Calu3 (cell line): ENCODE measurements at regions of chr5 and their contacts with region 1.

Region 1: DNA sequence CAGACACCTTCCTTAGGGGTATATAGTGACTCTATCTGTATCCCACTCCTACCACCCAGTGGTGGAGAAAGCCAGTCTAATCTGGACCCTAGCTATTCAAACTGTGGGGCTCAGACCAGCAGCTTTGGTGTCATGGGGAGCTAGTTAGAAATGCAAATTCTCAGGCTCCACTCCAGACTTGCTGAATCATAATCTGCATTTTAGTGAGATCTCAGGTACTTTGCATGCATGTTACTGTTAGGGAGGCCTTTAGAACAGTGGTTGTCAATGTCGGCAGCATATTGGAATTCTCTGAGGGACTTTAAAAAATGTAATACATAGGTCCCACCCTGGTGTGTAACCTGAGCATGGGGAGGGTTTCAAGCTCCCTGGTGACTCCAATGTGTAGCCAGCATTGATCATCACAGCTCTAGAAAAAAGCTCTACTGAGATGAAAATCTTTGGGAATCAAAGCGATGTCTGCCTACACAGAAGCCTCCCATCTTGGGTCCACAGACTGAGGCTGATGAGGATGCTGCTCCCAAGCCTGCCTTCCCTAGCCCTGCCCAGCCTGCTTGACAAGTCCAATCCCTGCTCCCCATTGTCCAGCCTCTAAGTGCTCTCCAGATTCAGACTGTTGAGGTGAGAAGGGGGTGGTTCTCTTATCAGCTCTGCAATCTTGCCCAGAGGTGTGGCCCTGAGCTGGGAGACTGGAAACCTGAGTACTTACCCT is 11.9 kb upstream of the GM2A start:
- DNase-seq: peak; percentile 49
- H3K4me3 Mint-ChIP-seq: no peak overlapping the region
- H3K27ac Mint-ChIP-seq: no peak overlapping the region
- H3K4me1 Mint-ChIP-seq: peaks cover 10% of the 10 kb centered on the region
- H3K27me3 Mint-ChIP-seq: peaks cover 21% of the 10 kb centered on the region
- CTCF ChIP-seq: no peak

Region 2: DNA sequence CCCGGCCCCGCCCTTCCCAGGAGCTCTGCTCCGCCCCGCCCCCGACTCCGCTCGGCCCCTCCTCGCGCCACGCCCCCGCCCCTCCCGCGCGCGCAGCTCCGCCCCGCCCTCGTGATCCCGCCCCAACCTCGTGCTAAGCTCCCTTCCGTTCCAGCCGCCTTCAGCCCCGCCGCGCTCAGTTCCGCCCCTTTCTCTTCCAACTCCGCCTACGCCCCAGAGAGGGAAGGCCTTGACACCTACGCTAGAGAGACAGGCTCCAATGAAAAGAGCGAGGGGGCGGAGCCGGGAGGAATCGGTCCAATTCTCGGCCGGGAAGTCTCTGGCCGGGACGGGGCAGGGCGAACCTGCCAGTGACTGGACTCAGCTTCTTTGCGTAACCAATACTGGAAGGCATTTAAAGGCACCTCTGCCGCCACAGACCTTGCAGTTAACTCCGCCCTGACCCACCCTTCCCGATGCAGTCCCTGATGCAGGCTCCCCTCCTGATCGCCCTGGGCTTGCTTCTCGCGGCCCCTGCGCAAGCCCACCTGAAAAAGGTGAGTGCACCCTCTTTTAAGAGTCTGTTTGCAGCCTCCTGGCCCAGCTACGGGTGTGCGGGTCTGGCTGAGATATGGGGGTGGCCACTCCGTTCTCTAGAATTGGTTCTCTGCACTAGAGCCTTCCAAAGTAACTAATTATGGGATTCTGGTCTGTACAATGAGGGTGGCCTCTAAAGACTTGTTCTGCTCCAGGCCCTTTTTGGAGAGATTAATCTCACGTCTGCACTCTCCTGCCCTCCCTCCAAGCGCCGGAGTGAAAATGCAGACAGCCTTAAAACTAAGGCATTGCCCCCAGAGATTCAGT is 11.9 kb after region 1 on chr5 and contains the start of gene GM2A:
- CTCF ChIA-PET with region 1: interaction called, 10 read pairs
- intact Hi-C with region 1: no loop called
- DNase-seq: peak; percentile 99
- H3K4me3 Mint-ChIP-seq: peak within 1 kb of the TSS; percentile 85
- H3K27ac Mint-ChIP-seq: peak within 1 kb of the TSS; percentile 71
- H3K4me1 Mint-ChIP-seq: peaks cover 11% of the 10 kb centered on the region
- H3K27me3 Mint-ChIP-seq: peaks cover 22% of the 10 kb centered on the region
- CTCF ChIP-seq: no peak
- total RNA-seq, gene GM2A: 21.1 and 22.4 TPM in 2 replicates

Region 3: DNA sequence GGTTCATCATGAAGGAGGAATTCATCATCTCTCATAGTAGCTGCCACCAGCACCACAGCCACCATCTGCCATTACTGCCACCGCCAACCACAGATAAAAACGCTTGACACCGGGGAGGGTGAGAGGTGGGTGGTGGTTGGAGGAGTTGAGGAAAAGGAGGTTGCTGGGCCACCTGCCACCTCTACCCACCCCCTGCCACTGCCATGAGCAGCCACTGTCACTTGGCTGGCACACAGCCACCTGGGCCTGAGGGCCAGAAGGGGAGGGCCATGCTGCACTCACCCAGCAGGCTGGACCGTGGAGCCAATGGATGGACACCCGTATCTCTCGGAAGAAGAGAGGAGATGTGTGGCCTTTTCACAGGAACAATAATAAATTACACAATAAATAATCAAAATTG is 137.5 kb after region 1 on chr5:
- CTCF ChIA-PET with region 1: no interaction called
- intact Hi-C with region 1: no loop called
- DNase-seq: no peak
- H3K4me3 Mint-ChIP-seq: no peak overlapping the region
- H3K27ac Mint-ChIP-seq: no peak overlapping the region
- H3K4me1 Mint-ChIP-seq: no peaks in the 10 kb centered on the region
- H3K27me3 Mint-ChIP-seq: peaks cover 7% of the 10 kb centered on the region
- CTCF ChIP-seq: no peak